Heart right ventricle (tissue), 16 donors: ENCODE measurements at regions of chr12 and their contacts with region 1.

Region 1: DNA sequence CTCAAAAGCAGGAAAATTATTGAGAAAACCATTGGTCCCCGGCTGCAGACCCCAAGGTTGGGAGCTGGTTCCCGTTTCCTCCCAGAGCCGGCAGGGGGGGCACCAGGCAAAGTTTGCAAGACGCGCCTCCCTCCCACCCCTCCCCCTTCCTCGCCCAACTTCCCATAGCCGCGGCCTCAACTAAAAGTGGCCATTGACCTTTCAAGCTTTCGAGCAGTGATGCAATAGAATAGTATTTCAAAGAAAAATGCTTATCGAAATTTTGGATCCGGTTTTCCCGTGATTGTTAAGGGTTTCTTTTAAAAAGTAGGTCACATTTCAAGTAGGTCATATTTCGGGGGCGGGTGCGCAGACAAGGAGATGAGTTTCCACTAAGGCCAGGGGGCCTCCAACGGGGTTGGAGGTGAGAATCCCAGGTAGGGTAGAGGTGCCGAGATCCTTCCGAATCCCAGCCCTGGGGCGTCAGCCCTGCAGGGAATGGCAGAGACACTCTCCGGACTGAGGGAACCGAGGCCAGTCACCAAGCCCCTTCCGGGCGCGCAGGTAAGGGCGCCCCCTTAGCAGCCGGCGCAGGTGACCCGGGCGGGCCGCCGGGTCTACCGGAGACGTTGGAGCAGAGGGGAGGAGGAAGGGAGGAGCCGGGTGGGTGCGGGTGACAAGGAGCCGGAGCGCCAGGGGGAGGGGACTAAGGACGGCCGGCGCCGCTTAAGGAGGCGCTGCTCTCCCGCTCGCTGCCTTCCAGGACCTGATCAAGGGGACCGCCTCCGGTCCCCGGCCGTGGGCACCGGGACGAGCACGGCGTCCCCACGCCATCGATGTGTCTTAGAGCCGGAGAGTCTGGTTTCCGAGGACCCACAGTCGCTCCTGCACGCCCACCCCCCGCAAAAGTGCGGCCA is 2.6 kb upstream of the SOCS2 start:
- DNase-seq: peak; percentile 87 to 93
- ATAC-seq: peak; percentile 76 to 86 (median 84)
- H3K4me3 ChIP-seq: peak overlapping the region; percentile 62 to 100 (median 91)
- H3K27ac ChIP-seq: peak overlapping the region; percentile 93 to 100 (median 96)
- H3K4me1 ChIP-seq: peaks cover 0 to 29% (median 15%) of the 10 kb centered on the region in 9 donors
- H3K27me3 ChIP-seq: peaks cover 0 to 73% (median 0%) of the 10 kb centered on the region in 7 donors
- CTCF ChIP-seq: peak; percentile 75 to 93 (median 90)

Region 2: DNA sequence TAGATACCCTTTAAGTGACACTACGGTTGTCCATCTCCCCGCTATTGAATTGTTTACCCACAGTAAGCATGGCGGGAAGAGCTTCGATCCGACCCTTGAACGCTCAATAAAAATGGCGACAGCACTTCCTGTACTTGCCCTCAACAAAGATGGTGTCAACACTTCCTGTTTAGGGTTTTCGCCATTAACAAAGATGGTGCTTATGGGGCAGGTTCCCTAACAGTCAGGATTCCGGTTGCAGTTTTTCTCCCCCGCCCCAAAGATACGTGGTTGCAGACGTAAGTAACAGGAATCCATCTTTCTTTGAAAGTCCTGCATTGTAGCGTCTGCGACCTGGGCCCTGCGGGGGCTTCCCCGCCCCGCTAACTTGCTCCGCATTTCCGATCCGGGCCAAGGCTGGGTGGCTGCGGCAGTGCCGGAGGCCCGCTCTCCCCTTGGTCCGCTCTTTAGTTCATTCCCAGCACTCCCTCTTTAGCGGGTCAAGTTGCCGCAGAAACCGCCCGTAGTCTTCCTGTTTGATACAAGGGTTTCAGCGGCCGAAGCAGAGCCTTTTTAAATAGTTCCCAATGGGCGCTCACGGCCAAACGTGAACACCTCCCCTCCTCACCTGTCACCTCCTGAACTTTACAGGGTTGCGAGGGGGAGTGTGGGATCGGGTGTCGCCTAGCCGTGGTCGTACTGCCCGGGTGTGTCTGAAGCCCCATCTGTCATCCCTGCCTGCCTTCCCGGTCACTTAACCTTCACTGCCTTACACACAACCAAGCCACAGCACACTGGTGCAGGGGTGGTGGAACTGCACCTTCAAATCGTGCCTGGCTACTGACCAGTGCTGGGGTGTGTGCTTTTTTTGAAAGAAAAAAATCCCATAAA is 107.5 kb after region 1 on chr12 and contains the start of gene CRADD:
- intact Hi-C with region 1: loop called (anchors 1 to 10 kb)
- DNase-seq: peak; percentile 67 to 93
- ATAC-seq: peak; percentile 91 to 97 (median 94)
- H3K4me3 ChIP-seq: peak within 1 kb of the TSS; percentile 48 to 80 (median 66)
- H3K27ac ChIP-seq: peak within 1 kb of the TSS; percentile 86 to 99 (median 98)
- H3K4me1 ChIP-seq: peaks cover 0 to 51% (median 27%) of the 10 kb centered on the region in 9 donors
- H3K27me3 ChIP-seq: no peaks in the 10 kb centered on the region
- CTCF ChIP-seq: no peak
- total RNA-seq, gene CRADD: 36.3 to 80.1 (median 60.2) TPM

Region 3: GRCh38 chr12:93802698-93803423 is 233.0 kb after region 1 on chr12:
- intact Hi-C with region 1: loop called in 2 of 10 experiments (anchors 5 to 10 kb)
- DNase-seq: no peak
- ATAC-seq: peak; percentile 58 to 85 (median 76)
- H3K4me3 ChIP-seq: peak overlapping the region in 3 of 10 donors; percentile 14 to 15 (median 14)
- H3K27ac ChIP-seq: peak overlapping the region; percentile 40 to 85 (median 68)
- H3K4me1 ChIP-seq: peaks cover 4 to 53% (median 41%) of the 10 kb centered on the region in 9 donors
- H3K27me3 ChIP-seq: no peaks in the 10 kb centered on the region
- CTCF ChIP-seq: peak in 7 of 9 donors; percentile 11 to 64 (median 34)

Region 4: GRCh38 chr12:93908846-93909567 is 339.1 kb after region 1 on chr12:
- intact Hi-C with region 1: loop called in 1 of 10 experiments (anchors 10 kb)
- DNase-seq: peak in 1 of 2 donors; percentile 24
- ATAC-seq: peak in 7 of 8 donors; percentile 42 to 92 (median 77)
- H3K4me3 ChIP-seq: no peak overlapping the region
- H3K27ac ChIP-seq: peak overlapping the region in 4 of 10 donors; percentile 5 to 72 (median 18)
- H3K4me1 ChIP-seq: peaks cover 0 to 18% (median 10%) of the 10 kb centered on the region in 9 donors
- H3K27me3 ChIP-seq: no peaks in the 10 kb centered on the region
- CTCF ChIP-seq: no peak

Region 5: GRCh38 chr12:94074980-94075928 is 505.4 kb after region 1 on chr12:
- intact Hi-C with region 1: loop called in 5 of 10 experiments (anchors 1 to 10 kb)
- DNase-seq: peak; percentile 57 to 73
- ATAC-seq: peak; percentile 81 to 94 (median 90)
- H3K4me3 ChIP-seq: peak overlapping the region in 4 of 10 donors; percentile 3 to 25 (median 14)
- H3K27ac ChIP-seq: peak overlapping the region; percentile 68 to 94 (median 89)
- H3K4me1 ChIP-seq: peaks cover 8 to 33% (median 21%) of the 10 kb centered on the region in 9 donors
- H3K27me3 ChIP-seq: no peaks in the 10 kb centered on the region
- CTCF ChIP-seq: peak; percentile 48 to 84 (median 73)

Region 6: GRCh38 chr12:94218233-94218632 is 648.3 kb after region 1 on chr12:
- intact Hi-C with region 1: no loop called
- DNase-seq: no peak
- ATAC-seq: no peak
- H3K4me3 ChIP-seq: no peak overlapping the region
- H3K27ac ChIP-seq: no peak overlapping the region
- H3K4me1 ChIP-seq: no peaks in the 10 kb centered on the region
- H3K27me3 ChIP-seq: no peaks in the 10 kb centered on the region
- CTCF ChIP-seq: no peak